MCF 10A (cell line): ENCODE measurements at regions of chr1 and their contacts with region 1.

Region 1: GRCh38 chr1:64136752-64137411 is 66.5 kb upstream of the UBE2U start:
- DNase-seq: peak; percentile 85
- H3K4me3 Mint-ChIP-seq: no peak overlapping the region
- H3K27ac Mint-ChIP-seq: peak overlapping the region; percentile 27
- H3K4me1 Mint-ChIP-seq: peaks cover 23% of the 10 kb centered on the region
- H3K27me3 Mint-ChIP-seq: no peaks in the 10 kb centered on the region
- CTCF ChIP-seq: peak; percentile 77

Region 2: GRCh38 chr1:63615768-63616420 is 521.0 kb before region 1 on chr1:
- CTCF ChIA-PET with region 1: interaction called, 12 read pairs
- POLR2A ChIA-PET with region 1: no interaction called
- intact Hi-C with region 1: loop called (anchors 1 kb)
- DNase-seq: peak; percentile 82
- H3K4me3 Mint-ChIP-seq: no peak overlapping the region
- H3K27ac Mint-ChIP-seq: no peak overlapping the region
- H3K4me1 Mint-ChIP-seq: peaks cover 24% of the 10 kb centered on the region
- H3K27me3 Mint-ChIP-seq: no peaks in the 10 kb centered on the region
- CTCF ChIP-seq: peak; percentile 72

Region 3: DNA sequence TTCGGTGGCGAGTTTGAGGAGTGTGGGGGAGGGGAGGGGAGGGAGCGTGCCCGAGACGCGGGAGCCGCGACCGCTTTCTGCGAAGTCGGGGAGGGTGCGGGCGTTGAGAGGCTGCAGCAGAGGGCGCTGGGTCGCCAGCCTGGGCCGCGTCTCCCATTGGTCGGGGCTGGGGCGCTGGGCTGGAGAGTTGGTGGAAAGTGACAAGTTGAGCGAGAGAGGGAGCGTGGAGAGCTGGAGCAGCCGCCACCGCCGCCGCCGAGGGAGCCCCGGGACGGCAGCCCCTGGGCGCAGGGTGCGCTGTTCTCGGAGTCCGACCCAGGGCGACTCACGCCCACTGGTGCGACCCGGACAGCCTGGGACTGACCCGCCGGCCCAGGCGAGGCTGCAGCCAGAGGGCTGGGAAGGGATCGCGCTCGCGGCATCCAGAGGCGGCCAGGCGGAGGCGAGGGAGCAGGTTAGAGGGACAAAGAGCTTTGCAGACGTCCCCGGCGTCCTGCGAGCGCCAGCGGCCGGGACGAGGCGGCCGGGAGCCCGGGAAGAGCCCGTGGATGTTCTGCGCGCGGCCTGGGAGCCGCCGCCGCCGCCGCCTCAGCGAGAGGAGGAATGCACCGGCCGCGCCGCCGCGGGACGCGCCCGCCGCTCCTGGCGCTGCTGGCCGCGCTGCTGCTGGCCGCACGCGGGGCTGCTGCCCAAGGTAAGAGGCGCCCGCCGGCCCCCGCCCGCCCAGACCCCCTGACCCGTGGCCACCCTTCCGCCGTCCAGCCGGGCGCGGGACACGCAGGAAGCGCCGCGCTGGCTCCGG is 362.9 kb before region 1 on chr1 and contains the start of gene ROR1:
- CTCF ChIA-PET with region 1: interaction called, 16 read pairs
- POLR2A ChIA-PET with region 1: interaction called, 13 read pairs
- intact Hi-C with region 1: loop called (anchors 1 kb)
- DNase-seq: peak; percentile 85
- H3K4me3 Mint-ChIP-seq: peak within 1 kb of the TSS; percentile 93
- H3K27ac Mint-ChIP-seq: peak within 1 kb of the TSS; percentile 29
- H3K4me1 Mint-ChIP-seq: peaks cover 16% of the 10 kb centered on the region
- H3K27me3 Mint-ChIP-seq: no peaks in the 10 kb centered on the region
- CTCF ChIP-seq: peak; percentile 57
- total RNA-seq, gene ROR1: 4.6 and 10.3 TPM in 2 replicates

Region 4: DNA sequence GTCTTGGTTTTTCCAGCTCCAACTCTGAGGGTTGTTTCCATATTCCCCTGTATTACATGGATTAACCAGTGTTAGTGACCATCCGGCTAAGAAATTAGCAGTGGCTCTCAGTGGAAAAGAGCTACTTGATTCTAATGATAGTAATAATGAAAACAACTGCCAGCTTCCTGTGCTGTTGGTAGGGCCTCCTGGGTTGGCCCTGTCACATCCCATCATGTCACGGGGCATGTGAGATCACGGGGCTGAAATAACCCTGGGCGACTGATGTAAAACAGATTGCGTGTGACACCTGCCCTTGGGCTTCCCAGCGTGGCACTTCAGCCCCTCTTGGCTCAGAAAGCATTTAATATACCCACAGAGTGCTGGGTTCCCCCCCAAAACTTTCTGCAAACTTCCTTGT is 214.0 kb before region 1 on chr1:
- CTCF ChIA-PET with region 1: interaction called, 13 read pairs
- POLR2A ChIA-PET with region 1: no interaction called
- intact Hi-C with region 1: loop called (anchors 1 kb)
- DNase-seq: no peak
- H3K4me3 Mint-ChIP-seq: no peak overlapping the region
- H3K27ac Mint-ChIP-seq: no peak overlapping the region
- H3K4me1 Mint-ChIP-seq: peaks cover 23% of the 10 kb centered on the region
- H3K27me3 Mint-ChIP-seq: no peaks in the 10 kb centered on the region
- CTCF ChIP-seq: no peak

Region 5: GRCh38 chr1:64051796-64052195 is 85.1 kb before region 1 on chr1:
- CTCF ChIA-PET with region 1: no interaction called
- POLR2A ChIA-PET with region 1: no interaction called
- intact Hi-C with region 1: no loop called
- DNase-seq: no peak
- H3K4me3 Mint-ChIP-seq: no peak overlapping the region
- H3K27ac Mint-ChIP-seq: no peak overlapping the region
- H3K4me1 Mint-ChIP-seq: peaks cover 14% of the 10 kb centered on the region
- H3K27me3 Mint-ChIP-seq: no peaks in the 10 kb centered on the region
- CTCF ChIP-seq: no peak

Region 6: GRCh38 chr1:64112281-64112680 is 24.6 kb before region 1 on chr1:
- CTCF ChIA-PET with region 1: interaction called, 12 read pairs
- POLR2A ChIA-PET with region 1: interaction called, 4 read pairs
- intact Hi-C with region 1: no loop called
- DNase-seq: peak; percentile 34
- H3K4me3 Mint-ChIP-seq: no peak overlapping the region
- H3K27ac Mint-ChIP-seq: no peak overlapping the region
- H3K4me1 Mint-ChIP-seq: peaks cover 13% of the 10 kb centered on the region
- H3K27me3 Mint-ChIP-seq: no peaks in the 10 kb centered on the region
- CTCF ChIP-seq: no peak

Region 7: DNA sequence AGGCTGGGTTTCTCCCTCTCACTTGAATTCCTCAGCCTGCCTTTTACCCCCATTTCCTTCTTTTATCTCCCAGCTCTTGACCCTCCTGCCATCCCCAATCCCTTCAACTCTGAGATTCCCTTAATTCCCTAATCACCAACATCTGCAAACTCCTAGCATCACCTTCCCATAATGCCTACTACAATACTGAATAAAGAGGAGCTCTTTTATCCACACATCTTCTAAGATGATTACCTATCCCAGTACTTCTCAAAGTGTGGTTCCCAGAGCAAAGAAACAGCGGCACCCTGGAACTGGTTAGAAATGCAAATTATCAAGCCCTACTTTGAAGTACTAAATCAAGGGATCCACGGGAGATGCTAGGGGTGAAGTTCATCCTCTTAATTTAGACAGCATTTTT is 45.3 kb after region 1 on chr1:
- CTCF ChIA-PET with region 1: interaction called, 10 read pairs
- POLR2A ChIA-PET with region 1: no interaction called
- intact Hi-C with region 1: no loop called
- DNase-seq: no peak
- H3K4me3 Mint-ChIP-seq: no peak overlapping the region
- H3K27ac Mint-ChIP-seq: no peak overlapping the region
- H3K4me1 Mint-ChIP-seq: no peaks in the 10 kb centered on the region
- H3K27me3 Mint-ChIP-seq: no peaks in the 10 kb centered on the region
- CTCF ChIP-seq: no peak